ENCODE measurements at regions of chr13 and their contacts with region 1.

Region 1: DNA sequence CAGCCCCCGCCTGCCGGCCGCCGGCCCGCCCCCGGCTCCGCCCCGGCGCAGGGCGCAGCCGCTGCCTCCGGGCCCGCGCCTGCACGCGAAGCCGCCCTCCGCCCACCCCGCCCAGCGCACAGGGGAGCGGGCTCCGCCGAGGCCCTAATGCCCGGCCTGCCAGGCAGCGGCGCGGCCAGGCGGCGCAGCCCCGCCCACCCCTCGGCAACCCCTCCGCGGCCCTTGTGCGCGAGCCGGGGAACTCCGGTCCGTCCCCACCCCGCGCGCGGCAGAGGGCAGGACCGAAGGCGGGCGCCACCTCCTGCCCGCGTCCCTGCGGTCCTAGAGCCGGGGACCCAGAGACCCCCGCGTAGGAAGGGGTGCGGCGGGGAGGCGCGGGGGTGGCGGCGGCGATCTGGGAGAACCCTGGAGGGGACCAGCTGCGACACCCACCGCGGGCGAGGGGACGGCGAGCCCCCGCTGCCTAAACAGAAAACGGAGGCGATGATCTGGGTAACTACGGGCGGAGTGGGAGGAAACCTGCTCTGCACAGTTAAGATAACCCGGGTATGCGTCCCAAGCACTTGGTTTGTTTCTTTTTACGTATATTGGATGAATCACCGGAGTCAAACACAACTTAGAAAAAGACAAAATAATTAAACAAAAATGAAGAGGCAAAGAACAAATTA is 350 bp upstream of the USP12 start:
- DNase-seq: peak; percentile 85 to 93 (median 90)
- H3K4me3 ChIP-seq: peak overlapping the region; percentile 80
- H3K27ac ChIP-seq: peak overlapping the region; percentile 92 to 94
- H3K4me1 ChIP-seq: peaks cover 9% of the 10 kb centered on the region
- H3K27me3 ChIP-seq: no peaks in the 10 kb centered on the region
- CTCF ChIP-seq: no peak
- EP300 ChIP-seq: no peak
- POLR2A ChIP-seq: no peak

Region 2: GRCh38 chr13:26985285-26985878 is 186.6 kb before region 1 on chr13:
- intact Hi-C with region 1: loop called in 1 of 4 experiments (anchors 5 kb)
- DNase-seq: peak; percentile 41 to 82 (median 55)
- H3K4me3 ChIP-seq: no peak overlapping the region
- H3K27ac ChIP-seq: no peak overlapping the region
- H3K4me1 ChIP-seq: peaks cover 9% of the 10 kb centered on the region
- H3K27me3 ChIP-seq: no peaks in the 10 kb centered on the region
- CTCF ChIP-seq: peak; percentile 57 to 85 (median 71)
- EP300 ChIP-seq: no peak
- POLR2A ChIP-seq: no peak

Region 3: GRCh38 chr13:27130979-27131623 is 40.9 kb before region 1 on chr13:
- intact Hi-C with region 1: no loop called
- DNase-seq: no peak
- H3K4me3 ChIP-seq: no peak overlapping the region
- H3K27ac ChIP-seq: no peak overlapping the region
- H3K4me1 ChIP-seq: peaks cover 7% of the 10 kb centered on the region
- H3K27me3 ChIP-seq: no peaks in the 10 kb centered on the region
- CTCF ChIP-seq: no peak
- EP300 ChIP-seq: no peak
- POLR2A ChIP-seq: no peak

Region 4: GRCh38 chr13:27226991-27227390 is 55.0 kb after region 1 on chr13:
- intact Hi-C with region 1: no loop called
- DNase-seq: no peak
- H3K4me3 ChIP-seq: no peak overlapping the region
- H3K27ac ChIP-seq: no peak overlapping the region
- H3K4me1 ChIP-seq: no peaks in the 10 kb centered on the region
- H3K27me3 ChIP-seq: no peaks in the 10 kb centered on the region
- CTCF ChIP-seq: no peak
- EP300 ChIP-seq: no peak
- POLR2A ChIP-seq: no peak

Region 5: GRCh38 chr13:27242706-27243105 is 70.7 kb after region 1 on chr13:
- intact Hi-C with region 1: loop called in 2 of 4 experiments (anchors 10 kb)
- DNase-seq: no peak
- H3K4me3 ChIP-seq: no peak overlapping the region
- H3K27ac ChIP-seq: no peak overlapping the region
- H3K4me1 ChIP-seq: no peaks in the 10 kb centered on the region
- H3K27me3 ChIP-seq: no peaks in the 10 kb centered on the region
- CTCF ChIP-seq: no peak
- EP300 ChIP-seq: no peak
- POLR2A ChIP-seq: no peak

Region 6: GRCh38 chr13:27251166-27252091 is 79.5 kb after region 1 on chr13 and contains the start of gene RPL21:
- intact Hi-C with region 1: loop called in 3 of 4 experiments (anchors 10 kb)
- DNase-seq: peak; percentile 94 to 97 (median 96)
- H3K4me3 ChIP-seq: peak within 1 kb of the TSS; percentile 86
- H3K27ac ChIP-seq: peak within 1 kb of the TSS; percentile 91 to 96
- H3K4me1 ChIP-seq: peaks cover 7% of the 10 kb centered on the region
- H3K27me3 ChIP-seq: no peaks in the 10 kb centered on the region
- CTCF ChIP-seq: no peak
- EP300 ChIP-seq: peak; percentile 85
- POLR2A ChIP-seq: peak; percentile 75
- total RNA-seq, gene RPL21: 1,871 to 3,304 (median 2,161) TPM

Measured in ovary (tissue), 10 donors.